ENCODE measurements at regions of chr15 and their contacts with region 1.

Region 1: DNA sequence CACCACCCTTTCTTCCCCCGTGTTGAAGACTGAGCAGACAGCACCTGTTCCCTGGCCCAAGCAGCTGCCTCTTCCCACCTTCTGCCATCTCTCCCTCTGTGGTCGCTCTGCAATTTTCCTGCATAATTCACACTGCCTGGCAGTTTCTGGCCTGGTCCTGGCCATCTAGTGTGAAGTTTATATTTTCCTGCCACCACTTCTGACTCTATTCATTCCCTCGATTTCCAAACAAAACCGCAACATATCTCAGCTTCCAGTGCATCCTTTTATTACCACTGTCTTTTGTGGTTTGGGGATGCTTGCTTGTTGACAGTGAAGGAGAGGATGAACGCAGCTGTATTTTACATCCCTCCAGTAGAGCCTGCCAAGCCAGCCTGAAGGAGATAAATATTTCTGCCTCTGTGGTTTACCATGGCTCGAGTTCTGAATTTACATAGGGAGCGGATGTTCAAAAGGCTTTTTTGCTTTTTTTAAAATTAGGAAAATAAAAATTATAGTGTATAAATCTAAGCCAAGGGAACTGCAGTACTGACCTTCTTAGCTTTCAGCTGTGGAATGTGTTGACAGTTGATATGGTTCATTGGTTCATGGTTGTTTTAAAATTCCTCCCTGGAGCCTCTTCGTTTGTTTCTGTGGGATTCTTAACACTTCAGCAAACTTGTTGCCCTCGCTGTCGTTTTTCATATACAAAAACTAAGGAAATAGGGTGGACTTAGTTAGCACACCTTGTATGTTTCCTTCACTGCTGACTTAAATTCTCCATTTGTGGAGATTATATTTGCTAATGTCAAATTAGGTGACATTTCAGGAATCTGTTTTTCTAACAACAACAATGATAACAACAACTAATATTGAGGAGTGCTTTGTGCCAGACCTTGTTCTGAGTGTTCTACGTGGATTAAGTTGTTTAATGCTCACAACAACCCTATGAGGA is 250.5 kb downstream of the ADAMTSL3 start:
- DNase-seq: peak; percentile 84
- H3K4me3 ChIP-seq: no peak overlapping the region
- H3K27ac ChIP-seq: peak overlapping the region; percentile 58 to 85 (median 79)
- H3K4me1 ChIP-seq: peaks cover 0 to 29% (median 28%) of the 10 kb centered on the region in 4 donors
- H3K27me3 ChIP-seq: no peaks in the 10 kb centered on the region
- CTCF ChIP-seq: no peak
- EP300 ChIP-seq: peak in 1 of 4 donors; percentile 6
- POLR2A ChIP-seq: no peak

Region 2: GRCh38 chr15:82653483-82654168 is 1250.7 kb before region 1 on chr15:
- intact Hi-C with region 1: no loop called
- DNase-seq: no peak
- H3K4me3 ChIP-seq: no peak overlapping the region
- H3K27ac ChIP-seq: no peak overlapping the region
- H3K4me1 ChIP-seq: peaks cover 0 to under 1% (median under 1%) of the 10 kb centered on the region in 4 donors
- H3K27me3 ChIP-seq: no peaks in the 10 kb centered on the region
- CTCF ChIP-seq: no peak
- EP300 ChIP-seq: no peak
- POLR2A ChIP-seq: no peak

Region 3: GRCh38 chr15:83848315-83849050 is 55.9 kb before region 1 on chr15:
- intact Hi-C with region 1: no loop called
- DNase-seq: no peak
- H3K4me3 ChIP-seq: no peak overlapping the region
- H3K27ac ChIP-seq: peak overlapping the region; percentile 54 to 76 (median 66)
- H3K4me1 ChIP-seq: peaks cover 0 to 83% (median 60%) of the 10 kb centered on the region in 4 donors
- H3K27me3 ChIP-seq: no peaks in the 10 kb centered on the region
- CTCF ChIP-seq: no peak
- EP300 ChIP-seq: no peak
- POLR2A ChIP-seq: no peak

Region 4: DNA sequence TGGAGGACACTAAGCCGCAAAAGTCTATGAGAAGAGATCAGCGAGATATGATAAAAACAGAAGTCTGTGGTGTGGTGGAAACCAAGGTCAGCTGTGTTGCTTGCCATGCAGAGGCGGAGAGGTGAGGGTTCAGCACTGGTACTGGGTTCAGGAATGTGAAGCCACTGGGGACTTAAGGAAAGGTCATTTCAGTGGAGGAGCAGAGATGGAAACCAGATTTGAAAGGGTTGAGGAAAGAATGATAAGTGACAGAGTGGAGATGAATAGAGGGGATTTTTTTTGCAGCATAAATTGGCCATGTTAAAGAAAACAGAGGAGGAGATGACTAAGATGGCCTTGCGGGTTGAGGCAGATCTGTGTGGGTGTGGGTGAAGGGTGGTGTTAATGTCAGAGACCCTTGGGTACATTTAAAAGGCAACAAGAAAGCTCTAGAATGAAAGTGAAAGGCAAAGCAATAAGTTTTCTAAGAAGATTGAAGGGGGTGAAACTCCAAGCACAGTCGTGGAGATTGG is 15.0 kb after region 1 on chr15:
- intact Hi-C with region 1: loop called (anchors 2 kb)
- DNase-seq: no peak
- H3K4me3 ChIP-seq: no peak overlapping the region
- H3K27ac ChIP-seq: peak overlapping the region in 3 of 4 donors; percentile 12 to 64 (median 54)
- H3K4me1 ChIP-seq: peaks cover 0 to 44% (median 20%) of the 10 kb centered on the region in 4 donors
- H3K27me3 ChIP-seq: no peaks in the 10 kb centered on the region
- CTCF ChIP-seq: no peak
- EP300 ChIP-seq: no peak
- POLR2A ChIP-seq: no peak

Measured in sigmoid colon (tissue), 7 donors.